Caco-2 (cell line): ENCODE measurements at regions of chr5 and their contacts with region 1.

Region 1: GRCh38 chr5:113730787-113731186 is 217.3 kb downstream of the YTHDC2 start:
- DNase-seq: no peak
- H3K4me3 ChIP-seq: no peak overlapping the region
- H3K4me3 Mint-ChIP-seq: no peak overlapping the region
- H3K27ac Mint-ChIP-seq: no peak overlapping the region
- H3K4me1 ChIP-seq: no peaks in the 10 kb centered on the region
- H3K4me1 Mint-ChIP-seq: no peaks in the 10 kb centered on the region
- H3K27me3 ChIP-seq: no peaks in the 10 kb centered on the region
- H3K27me3 Mint-ChIP-seq: no peaks in the 10 kb centered on the region
- CTCF ChIP-seq: no peak

Region 2: DNA sequence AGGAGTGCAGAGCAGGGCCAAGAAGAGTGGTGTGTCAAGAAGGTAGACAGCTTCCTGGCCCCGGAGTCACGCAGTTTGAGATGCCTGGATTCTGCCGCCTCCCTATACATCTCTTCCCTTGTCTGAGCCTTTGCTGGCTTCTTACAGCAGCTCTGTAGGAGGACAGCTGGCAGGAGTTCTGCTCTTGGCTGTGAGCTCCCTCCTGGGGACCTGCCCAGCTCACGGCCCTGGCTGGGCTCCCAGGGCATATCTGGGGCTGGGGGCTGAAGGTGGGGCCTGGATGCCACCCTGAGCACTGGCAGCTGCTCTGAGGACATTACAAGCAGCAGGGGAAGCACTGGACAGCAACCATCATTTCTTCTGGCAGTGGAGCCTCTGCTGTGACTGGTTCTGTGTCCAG is 295.2 kb before region 1 on chr5:
- CTCF ChIA-PET with region 1: no interaction called
- POLR2A ChIA-PET with region 1: no interaction called
- intact Hi-C with region 1: no loop called
- DNase-seq: no peak
- H3K4me3 ChIP-seq: no peak overlapping the region
- H3K4me3 Mint-ChIP-seq: no peak overlapping the region
- H3K27ac Mint-ChIP-seq: no peak overlapping the region
- H3K4me1 ChIP-seq: no peaks in the 10 kb centered on the region
- H3K4me1 Mint-ChIP-seq: no peaks in the 10 kb centered on the region
- H3K27me3 ChIP-seq: no peaks in the 10 kb centered on the region
- H3K27me3 Mint-ChIP-seq: peaks cover 9% of the 10 kb centered on the region
- CTCF ChIP-seq: no peak

Region 3: GRCh38 chr5:113447498-113448050 is 283.2 kb before region 1 on chr5:
- CTCF ChIA-PET with region 1: no interaction called
- POLR2A ChIA-PET with region 1: no interaction called
- intact Hi-C with region 1: no loop called
- DNase-seq: peak in 1 of 2 experiments; percentile 51
- H3K4me3 ChIP-seq: no peak overlapping the region
- H3K4me3 Mint-ChIP-seq: no peak overlapping the region
- H3K27ac Mint-ChIP-seq: no peak overlapping the region
- H3K4me1 ChIP-seq: no peaks in the 10 kb centered on the region
- H3K4me1 Mint-ChIP-seq: no peaks in the 10 kb centered on the region
- H3K27me3 ChIP-seq: no peaks in the 10 kb centered on the region
- H3K27me3 Mint-ChIP-seq: peaks cover 16% of the 10 kb centered on the region
- CTCF ChIP-seq: peak; percentile 8 to 54

Region 4: DNA sequence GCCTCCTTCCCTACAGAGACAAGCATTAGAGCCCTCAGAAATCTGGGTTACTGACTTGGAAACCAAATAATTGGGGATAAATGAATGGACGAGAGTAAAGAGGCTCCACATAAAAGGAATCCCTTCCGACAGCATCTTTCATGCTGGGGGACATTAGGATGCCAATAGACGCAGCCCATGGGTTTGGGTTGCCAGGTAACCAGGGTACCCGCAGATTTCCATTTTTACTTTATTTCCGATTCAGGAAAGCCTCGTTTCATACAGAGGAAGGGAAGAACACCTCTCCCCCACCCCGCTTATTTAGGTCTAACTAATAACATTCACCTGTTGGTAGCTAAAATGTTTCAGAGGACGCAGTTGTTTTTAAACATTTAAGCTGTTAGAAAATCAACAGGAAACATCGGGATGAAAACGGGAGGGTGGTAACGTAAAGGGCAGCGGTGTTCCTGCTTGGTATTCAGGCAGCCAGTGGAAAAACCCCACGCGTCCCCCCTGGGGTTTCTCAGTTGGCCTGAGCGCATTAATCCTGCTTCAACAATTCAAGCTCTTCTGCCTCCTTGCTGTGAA is 37.8 kb before region 1 on chr5:
- CTCF ChIA-PET with region 1: no interaction called
- POLR2A ChIA-PET with region 1: no interaction called
- intact Hi-C with region 1: loop called (anchors 1 kb)
- DNase-seq: no peak
- H3K4me3 ChIP-seq: no peak overlapping the region
- H3K4me3 Mint-ChIP-seq: no peak overlapping the region
- H3K27ac Mint-ChIP-seq: no peak overlapping the region
- H3K4me1 ChIP-seq: no peaks in the 10 kb centered on the region
- H3K4me1 Mint-ChIP-seq: no peaks in the 10 kb centered on the region
- H3K27me3 ChIP-seq: no peaks in the 10 kb centered on the region
- H3K27me3 Mint-ChIP-seq: peaks cover 15% of the 10 kb centered on the region
- CTCF ChIP-seq: no peak